ENCODE measurements at regions of chr3 and their contacts with region 1.

Region 1: GRCh38 chr3:124409789-124410261 is 320.4 kb upstream of the UMPS start:
- DNase-seq: no peak
- H3K4me3 ChIP-seq: no peak overlapping the region
- H3K27ac ChIP-seq: no peak overlapping the region
- H3K4me1 ChIP-seq: peaks cover 0 to 12% (median 6%) of the 10 kb centered on the region in 4 donors
- H3K27me3 ChIP-seq: no peaks in the 10 kb centered on the region
- CTCF ChIP-seq: no peak
- EP300 ChIP-seq: no peak
- POLR2A ChIP-seq: no peak

Region 2: GRCh38 chr3:124234852-124235252 is 175.0 kb before region 1 on chr3:
- in situ Hi-C with region 1: no loop called
- intact Hi-C with region 1: no loop called
- DNase-seq: no peak
- H3K4me3 ChIP-seq: no peak overlapping the region
- H3K27ac ChIP-seq: no peak overlapping the region
- H3K4me1 ChIP-seq: no peaks in the 10 kb centered on the region
- H3K27me3 ChIP-seq: no peaks in the 10 kb centered on the region
- CTCF ChIP-seq: no peak
- EP300 ChIP-seq: no peak
- POLR2A ChIP-seq: no peak

Region 3: GRCh38 chr3:124529826-124530571 is 120.2 kb after region 1 on chr3:
- in situ Hi-C with region 1: no loop called
- intact Hi-C with region 1: no loop called
- DNase-seq: no peak
- H3K4me3 ChIP-seq: no peak overlapping the region
- H3K27ac ChIP-seq: no peak overlapping the region
- H3K4me1 ChIP-seq: no peaks in the 10 kb centered on the region
- H3K27me3 ChIP-seq: no peaks in the 10 kb centered on the region
- CTCF ChIP-seq: no peak
- EP300 ChIP-seq: no peak
- POLR2A ChIP-seq: no peak

Region 4: GRCh38 chr3:124657138-124657537 is 247.3 kb after region 1 on chr3:
- in situ Hi-C with region 1: no loop called
- intact Hi-C with region 1: loop called (anchors 5 kb)
- DNase-seq: no peak
- H3K4me3 ChIP-seq: no peak overlapping the region
- H3K27ac ChIP-seq: no peak overlapping the region
- H3K4me1 ChIP-seq: no peaks in the 10 kb centered on the region
- H3K27me3 ChIP-seq: no peaks in the 10 kb centered on the region
- CTCF ChIP-seq: no peak
- EP300 ChIP-seq: no peak
- POLR2A ChIP-seq: no peak

Measured in transverse colon (tissue), 4 donors.